ENCODE measurements at regions of chr2 and their contacts with region 1.

Region 1: GRCh38 chr2:235900631-235901030 is 267.6 kb downstream of the GBX2 start:
- DNase-seq: no peak
- H3K4me3 ChIP-seq: no peak overlapping the region
- CTCF ChIP-seq: no peak

Region 2: GRCh38 chr2:235849489-235849888 is 51.1 kb before region 1 on chr2:
- in situ Hi-C with region 1: loop called (anchors 5 kb)
- DNase-seq: no peak
- H3K4me3 ChIP-seq: no peak overlapping the region
- CTCF ChIP-seq: no peak

Region 3: GRCh38 chr2:235958221-235958931 is 57.7 kb after region 1 on chr2:
- in situ Hi-C with region 1: no loop called
- DNase-seq: no peak
- H3K4me3 ChIP-seq: no peak overlapping the region
- CTCF ChIP-seq: no peak